Panc1 (cell line): ENCODE measurements at regions of chr14 and their contacts with region 1.

Region 1: DNA sequence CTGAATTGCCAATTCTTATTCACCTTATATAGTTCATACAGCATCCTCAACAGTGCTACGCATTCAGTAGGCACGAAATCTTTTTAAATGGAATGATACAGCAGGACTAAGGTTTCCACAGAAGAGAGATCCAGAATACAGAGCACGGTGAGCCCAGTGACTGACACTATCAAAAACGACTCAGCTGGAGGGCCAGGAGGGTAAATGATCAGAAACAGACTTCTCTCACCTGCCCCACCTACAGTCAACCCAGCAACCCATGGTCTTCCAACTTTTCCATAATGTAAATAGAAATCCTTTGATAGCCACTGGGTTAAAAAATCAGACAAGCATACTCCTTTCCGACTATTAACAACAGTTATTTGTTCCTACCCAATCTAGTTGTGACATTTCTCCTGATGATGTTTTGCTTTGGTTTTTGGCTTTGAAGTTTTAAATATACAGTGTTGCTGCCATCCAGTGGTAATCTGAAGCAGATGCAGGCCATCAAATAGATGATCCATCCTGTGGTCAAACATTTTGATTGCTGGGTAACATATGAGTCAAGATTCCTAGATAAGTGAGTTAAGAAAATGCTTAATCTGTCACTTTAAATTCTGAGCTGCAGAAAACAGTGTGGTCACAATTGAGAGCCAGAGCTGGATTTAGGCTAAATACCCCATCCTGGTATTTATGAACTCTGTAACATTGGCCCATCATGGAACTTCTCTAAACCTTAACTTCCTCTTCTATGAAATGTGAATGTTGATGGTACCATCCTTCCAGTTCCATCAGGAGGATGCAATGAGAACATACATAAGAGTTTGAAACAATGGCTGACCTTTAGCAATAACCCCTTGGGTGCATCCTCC is 42.0 kb downstream of the GPHB5 start:
- DNase-seq: peak; percentile 25
- ATAC-seq: no peak
- H3K4me3 ChIP-seq: no peak overlapping the region
- H3K27ac ChIP-seq: no peak overlapping the region
- H3K4me1 ChIP-seq: no peaks in the 10 kb centered on the region
- H3K27me3 ChIP-seq: no peaks in the 10 kb centered on the region
- CTCF ChIP-seq: peak; percentile 68

Region 2: GRCh38 chr14:62162998-62163589 is 1113.6 kb before region 1 on chr14:
- CTCF ChIA-PET with region 1: no interaction called
- POLR2A ChIA-PET with region 1: no interaction called
- in situ Hi-C with region 1: no loop called
- intact Hi-C with region 1: loop called (anchors 2 kb)
- DNase-seq: peak; percentile 38
- ATAC-seq: peak; percentile 75; the same call in 1 of the 2 replicates
- H3K4me3 ChIP-seq: no peak overlapping the region
- H3K27ac ChIP-seq: no peak overlapping the region
- H3K4me1 ChIP-seq: no peaks in the 10 kb centered on the region
- H3K27me3 ChIP-seq: no peaks in the 10 kb centered on the region
- CTCF ChIP-seq: peak; percentile 71

Region 3: GRCh38 chr14:63044994-63045611 is 231.6 kb before region 1 on chr14 and contains the start of gene KCNH5:
- CTCF ChIA-PET with region 1: no interaction called
- POLR2A ChIA-PET with region 1: no interaction called
- in situ Hi-C with region 1: no loop called
- intact Hi-C with region 1: loop called (anchors 10 kb)
- DNase-seq: no peak
- ATAC-seq: peak; percentile 45; the same call in 1 of the 2 replicates
- H3K4me3 ChIP-seq: peak within 1 kb of the TSS; percentile 18 to 34
- H3K27ac ChIP-seq: no peak within 1 kb of the TSS
- H3K4me1 ChIP-seq: no peaks in the 10 kb centered on the region
- H3K27me3 ChIP-seq: peaks cover 4% of the 10 kb centered on the region
- CTCF ChIP-seq: no peak
- total RNA-seq, gene KCNH5: not detected

Region 4: GRCh38 chr14:63174760-63175211 is 101.9 kb before region 1 on chr14:
- CTCF ChIA-PET with region 1: no interaction called
- POLR2A ChIA-PET with region 1: no interaction called
- in situ Hi-C with region 1: no loop called
- intact Hi-C with region 1: loop called (anchors 1 kb)
- DNase-seq: no peak
- ATAC-seq: peak; percentile 30; the same call in 1 of the 2 replicates
- H3K4me3 ChIP-seq: no peak overlapping the region
- H3K27ac ChIP-seq: no peak overlapping the region
- H3K4me1 ChIP-seq: no peaks in the 10 kb centered on the region
- H3K27me3 ChIP-seq: no peaks in the 10 kb centered on the region
- CTCF ChIP-seq: peak; percentile 45; the same call in 1 of the 2 replicates